Left colon (tissue), 2 donors: ENCODE measurements at regions of chr2 and their contacts with region 1.

Region 1: DNA sequence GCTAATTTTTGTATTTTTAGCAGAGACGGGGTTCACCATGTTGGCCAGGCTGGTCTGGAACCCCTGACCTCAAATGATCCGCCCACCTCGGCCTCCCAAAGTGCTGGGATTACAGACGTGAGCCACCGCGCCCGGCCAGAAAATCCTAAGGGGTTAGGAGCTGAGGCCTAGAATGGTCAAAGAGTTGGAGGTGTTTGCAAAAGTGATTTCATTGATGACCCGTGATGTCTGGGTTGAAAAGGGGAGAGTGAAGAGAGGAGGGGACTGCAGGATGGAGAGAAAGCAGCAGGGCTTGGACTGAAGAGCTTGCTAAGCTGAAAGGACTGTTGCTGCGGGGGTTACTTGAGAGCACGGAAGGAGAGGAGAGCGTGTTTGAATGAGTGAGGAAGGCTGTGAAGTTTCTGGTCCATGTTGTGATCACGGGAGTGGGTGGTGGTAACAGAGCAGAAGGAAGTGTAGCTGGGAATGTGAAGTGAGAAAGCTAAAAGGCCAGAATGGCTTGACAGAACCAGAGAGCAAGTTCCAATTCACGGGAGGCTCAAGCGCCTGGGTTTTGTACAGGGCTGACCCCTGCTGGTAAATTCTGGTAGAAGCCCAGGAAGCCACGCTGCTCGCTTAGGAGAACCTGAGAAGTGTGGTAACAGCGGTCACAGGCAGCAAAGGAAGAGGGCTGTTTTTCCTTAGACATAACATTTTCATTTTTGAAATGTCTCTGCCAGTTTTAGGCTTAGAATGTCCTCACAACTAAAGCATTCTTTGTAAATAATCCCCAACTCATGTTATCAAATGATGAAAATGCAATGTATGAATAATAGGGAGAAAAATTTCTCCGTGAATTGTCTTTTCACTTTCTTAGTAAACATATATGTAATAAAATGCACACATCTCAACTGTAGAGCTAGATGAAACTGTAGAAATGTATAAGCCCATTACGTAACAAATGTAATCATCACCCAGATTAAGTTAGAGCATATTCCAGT is 40.5 kb upstream of the ACTR2 start:
- DNase-seq: peak; percentile 71 to 84
- ATAC-seq: peak; percentile 76

Region 2: DNA sequence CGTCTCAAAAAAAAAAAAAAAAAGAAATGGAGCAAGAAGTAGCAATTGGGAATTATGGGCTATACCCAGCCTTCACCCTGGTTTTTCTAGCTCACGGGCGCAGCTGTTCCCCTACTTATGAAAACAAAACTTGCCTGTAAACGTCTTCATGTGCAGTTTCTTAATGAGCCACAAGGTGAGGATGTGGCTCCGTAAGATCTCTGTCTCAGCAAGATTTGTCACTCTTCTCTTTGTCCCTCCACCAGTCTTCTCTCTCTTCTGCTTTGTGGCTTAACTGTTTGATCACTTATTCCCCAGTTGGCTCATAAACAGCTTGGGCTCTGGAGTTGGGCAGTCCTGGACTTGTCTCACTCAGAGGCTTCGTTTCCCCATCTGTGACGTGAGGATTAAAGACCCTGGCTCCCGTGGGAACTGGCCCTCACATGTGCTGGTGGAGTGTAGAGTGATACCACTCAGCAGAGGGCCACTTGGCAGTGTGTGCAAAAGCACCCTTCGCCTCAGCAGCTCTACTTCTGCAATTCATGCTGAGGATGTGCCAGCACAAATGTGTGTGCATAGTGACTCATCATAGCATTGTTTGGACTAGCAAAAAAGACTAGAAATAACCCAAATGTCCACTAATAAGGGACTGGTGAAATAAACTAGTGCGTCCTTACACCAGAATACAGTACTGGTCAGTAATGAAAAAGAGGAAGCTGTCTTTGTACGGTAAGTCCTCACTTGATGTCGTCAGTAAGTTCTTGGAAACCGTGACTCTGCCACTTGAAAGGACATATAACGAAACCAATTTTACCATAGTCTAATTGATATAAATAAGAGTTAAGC is 122.2 kb before region 1 on chr2:
- intact Hi-C with region 1: loop called in 1 of 2 experiments (anchors 10 kb)
- DNase-seq: peak; percentile 45 to 60
- ATAC-seq: peak; percentile 85

Region 3: DNA sequence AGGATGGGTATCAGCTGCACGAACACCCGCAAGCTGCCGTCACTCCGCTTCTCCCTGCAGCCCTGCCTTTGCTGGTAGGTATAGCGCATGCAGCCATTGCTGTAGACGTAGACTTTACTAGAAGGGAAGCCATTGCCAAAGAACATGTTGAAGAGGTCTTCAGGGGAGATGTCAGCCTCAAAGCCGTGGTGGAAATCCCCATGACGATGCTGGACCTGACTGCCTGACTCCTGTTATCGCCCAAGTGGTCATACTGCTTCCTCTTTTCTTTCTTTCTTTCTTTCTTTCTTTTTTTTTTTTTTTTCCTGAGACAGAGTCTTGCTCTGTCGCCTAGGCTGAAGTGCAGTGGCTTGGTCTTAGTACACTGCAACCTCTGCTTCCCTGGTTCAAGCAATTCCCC is 313.9 kb after region 1 on chr2:
- intact Hi-C with region 1: no loop called
- DNase-seq: no peak
- ATAC-seq: no peak